Activated B cell treated with CpG ODN at 0.5 μM for 24 hours (primary cell): ENCODE measurements at regions of chr12 and their contacts with region 1.

Region 1: DNA sequence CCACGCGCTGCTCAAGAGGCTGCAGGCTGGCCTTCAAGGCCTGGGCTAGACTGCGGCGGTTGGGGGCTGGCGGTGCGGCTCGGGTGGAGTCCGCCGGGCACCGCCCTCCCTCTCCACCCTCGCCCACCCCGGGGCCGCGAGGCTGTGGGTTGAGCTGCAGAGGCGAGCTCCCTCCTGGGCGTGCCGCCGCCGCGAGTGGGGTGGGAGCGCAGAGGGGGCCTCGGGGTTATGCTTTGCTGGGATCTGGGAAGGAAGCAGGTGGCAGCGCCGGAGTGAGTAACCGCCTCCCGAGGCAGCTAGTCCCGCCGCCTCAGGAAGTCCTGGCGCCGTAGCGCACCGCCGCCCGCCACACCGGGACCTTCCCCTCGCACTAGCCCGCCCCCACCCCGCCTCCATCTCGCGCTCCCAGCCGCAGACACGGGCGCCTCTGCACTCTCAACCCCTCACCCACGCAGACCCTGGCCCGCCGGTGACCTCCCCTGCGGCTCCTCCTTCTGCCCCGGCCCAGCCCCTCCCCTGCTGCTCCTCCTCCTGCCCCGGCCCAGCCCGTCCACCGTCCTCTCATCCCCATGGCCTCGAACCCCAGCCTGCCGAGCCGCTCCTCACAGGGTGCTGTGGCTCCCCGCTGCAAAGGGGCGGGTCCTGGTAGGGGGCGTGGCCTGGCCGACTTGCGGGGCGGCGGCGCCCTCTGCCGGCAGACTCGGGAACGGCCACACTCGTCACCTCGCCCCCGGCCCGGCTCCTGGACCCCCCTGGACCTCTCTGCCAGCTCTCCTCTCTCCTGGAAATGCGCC is 16.6 kb downstream of the TAMALIN start:
- DNase-seq: peak; percentile 92
- ATAC-seq: peak; percentile 63
- H3K4me3 Mint-ChIP-seq: peak overlapping the region; percentile 81
- H3K27ac Mint-ChIP-seq: no peak overlapping the region
- H3K4me1 Mint-ChIP-seq: peaks cover 57% of the 10 kb centered on the region
- H3K27me3 Mint-ChIP-seq: no peaks in the 10 kb centered on the region
- CTCF ChIP-seq: peak; percentile 86

Region 2: DNA sequence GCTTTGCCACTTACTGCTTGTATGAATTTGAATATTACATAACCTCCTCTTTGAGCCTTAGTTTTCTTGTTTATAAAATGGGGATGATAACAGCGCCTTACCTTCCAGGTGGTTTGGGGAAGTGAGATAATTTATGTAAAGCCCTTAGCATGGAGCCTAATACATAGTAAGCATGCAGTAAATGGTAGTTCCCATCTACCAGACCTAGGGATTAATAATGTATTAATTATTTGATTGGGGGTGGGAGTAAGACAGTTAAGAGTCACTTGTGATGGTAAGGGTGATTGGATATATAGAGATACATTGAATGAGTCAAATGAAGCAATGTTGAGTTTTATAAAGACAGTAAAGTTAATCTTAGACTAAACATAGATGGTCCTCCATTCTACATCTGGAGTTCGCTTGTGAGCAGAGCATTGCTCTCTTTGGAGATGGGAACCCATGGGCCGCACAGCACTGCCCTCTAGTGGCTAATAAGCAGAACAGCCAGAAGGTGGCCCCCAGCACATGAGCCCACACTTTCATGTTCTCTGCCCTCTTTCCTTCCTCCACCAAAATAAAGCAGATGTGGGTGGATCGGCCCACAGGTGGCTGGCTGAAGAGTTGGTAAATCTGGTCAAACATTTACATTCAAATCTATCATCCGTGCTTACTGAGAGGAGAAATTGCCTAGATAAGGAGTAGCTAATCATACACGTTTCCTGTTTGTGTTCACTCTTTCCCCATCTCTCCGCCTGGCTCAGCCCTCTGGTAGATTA is 43.1 kb before region 1 on chr12:
- CTCF ChIA-PET with region 1: interaction called, 9 read pairs
- POLR2A ChIA-PET with region 1: interaction called, 3 read pairs
- intact Hi-C with region 1: loop called (anchors 1 kb)
- DNase-seq: peak; percentile 41
- ATAC-seq: peak; percentile 98
- H3K4me3 Mint-ChIP-seq: no peak overlapping the region
- H3K27ac Mint-ChIP-seq: no peak overlapping the region
- H3K4me1 Mint-ChIP-seq: peaks cover 11% of the 10 kb centered on the region
- H3K27me3 Mint-ChIP-seq: no peaks in the 10 kb centered on the region
- CTCF ChIP-seq: peak; percentile 76

Region 3: GRCh38 chr12:52041695-52042123 is 18.3 kb after region 1 on chr12:
- CTCF ChIA-PET with region 1: interaction called, 31 read pairs
- POLR2A ChIA-PET with region 1: interaction called, 14 read pairs
- intact Hi-C with region 1: no loop called
- DNase-seq: peak; percentile 49
- ATAC-seq: peak; percentile 65
- H3K4me3 Mint-ChIP-seq: peak overlapping the region; percentile 73
- H3K27ac Mint-ChIP-seq: peak overlapping the region; percentile 74
- H3K4me1 Mint-ChIP-seq: peaks cover 71% of the 10 kb centered on the region
- H3K27me3 Mint-ChIP-seq: no peaks in the 10 kb centered on the region
- CTCF ChIP-seq: no peak

Region 4: GRCh38 chr12:52069327-52070184 is 46.2 kb after region 1 on chr12 and contains the start of gene ATG101:
- CTCF ChIA-PET with region 1: interaction called, 89 read pairs
- POLR2A ChIA-PET with region 1: interaction called, 42 read pairs
- intact Hi-C with region 1: loop called (anchors 1 kb)
- DNase-seq: peak; percentile 87
- ATAC-seq: peak; percentile 94
- H3K4me3 Mint-ChIP-seq: peak within 1 kb of the TSS; percentile 87
- H3K27ac Mint-ChIP-seq: peak within 1 kb of the TSS; percentile 96
- H3K4me1 Mint-ChIP-seq: peaks cover 47% of the 10 kb centered on the region
- H3K27me3 Mint-ChIP-seq: no peaks in the 10 kb centered on the region
- CTCF ChIP-seq: peak; percentile 31
- total RNA-seq, gene ATG101: 25.6 and 32.5 TPM in 2 replicates

Region 5: GRCh38 chr12:52121824-52122539 is 98.6 kb after region 1 on chr12:
- CTCF ChIA-PET with region 1: interaction called, 191 read pairs
- POLR2A ChIA-PET with region 1: interaction called, 37 read pairs
- intact Hi-C with region 1: loop called (anchors 1 kb)
- DNase-seq: peak; percentile 56
- ATAC-seq: no peak
- H3K4me3 Mint-ChIP-seq: no peak overlapping the region
- H3K27ac Mint-ChIP-seq: no peak overlapping the region
- H3K4me1 Mint-ChIP-seq: peaks cover 48% of the 10 kb centered on the region
- H3K27me3 Mint-ChIP-seq: peaks cover 11% of the 10 kb centered on the region
- CTCF ChIP-seq: no peak